Sigmoid colon (tissue), 7 donors: ENCODE measurements at regions of chr15 and their contacts with region 1.

Region 1: GRCh38 chr15:74540761-74541493 is at the start of gene ARID3B:
- DNase-seq: peak; percentile 99
- H3K4me3 ChIP-seq: peak within 1 kb of the TSS; percentile 84 to 92 (median 88)
- H3K27ac ChIP-seq: peak within 1 kb of the TSS; percentile 78 to 84 (median 82)
- H3K4me1 ChIP-seq: peaks cover 0 to 31% (median 27%) of the 10 kb centered on the region in 4 donors
- H3K27me3 ChIP-seq: no peaks in the 10 kb centered on the region
- CTCF ChIP-seq: no peak
- EP300 ChIP-seq: no peak
- POLR2A ChIP-seq: peak; percentile 6 to 35
- total RNA-seq, gene ARID3B: 2.3 to 9.7 (median 3.4) TPM

Region 2: GRCh38 chr15:74519311-74519710 is 21.6 kb before region 1 on chr15:
- intact Hi-C with region 1: no loop called
- DNase-seq: no peak
- H3K4me3 ChIP-seq: no peak overlapping the region
- H3K27ac ChIP-seq: no peak overlapping the region
- H3K4me1 ChIP-seq: no peaks in the 10 kb centered on the region
- H3K27me3 ChIP-seq: no peaks in the 10 kb centered on the region
- CTCF ChIP-seq: no peak
- EP300 ChIP-seq: no peak
- POLR2A ChIP-seq: no peak

Region 3: GRCh38 chr15:74598126-74598842 is 57.4 kb after region 1 on chr15:
- intact Hi-C with region 1: loop called (anchors 2 kb)
- DNase-seq: peak; percentile 98
- H3K4me3 ChIP-seq: peak overlapping the region; percentile 47 to 68 (median 60)
- H3K27ac ChIP-seq: peak overlapping the region; percentile 85 to 93 (median 88)
- H3K4me1 ChIP-seq: peaks cover 0 to 24% (median 22%) of the 10 kb centered on the region in 4 donors
- H3K27me3 ChIP-seq: no peaks in the 10 kb centered on the region
- CTCF ChIP-seq: no peak
- EP300 ChIP-seq: no peak
- POLR2A ChIP-seq: peak; percentile 83 to 89

Region 4: DNA sequence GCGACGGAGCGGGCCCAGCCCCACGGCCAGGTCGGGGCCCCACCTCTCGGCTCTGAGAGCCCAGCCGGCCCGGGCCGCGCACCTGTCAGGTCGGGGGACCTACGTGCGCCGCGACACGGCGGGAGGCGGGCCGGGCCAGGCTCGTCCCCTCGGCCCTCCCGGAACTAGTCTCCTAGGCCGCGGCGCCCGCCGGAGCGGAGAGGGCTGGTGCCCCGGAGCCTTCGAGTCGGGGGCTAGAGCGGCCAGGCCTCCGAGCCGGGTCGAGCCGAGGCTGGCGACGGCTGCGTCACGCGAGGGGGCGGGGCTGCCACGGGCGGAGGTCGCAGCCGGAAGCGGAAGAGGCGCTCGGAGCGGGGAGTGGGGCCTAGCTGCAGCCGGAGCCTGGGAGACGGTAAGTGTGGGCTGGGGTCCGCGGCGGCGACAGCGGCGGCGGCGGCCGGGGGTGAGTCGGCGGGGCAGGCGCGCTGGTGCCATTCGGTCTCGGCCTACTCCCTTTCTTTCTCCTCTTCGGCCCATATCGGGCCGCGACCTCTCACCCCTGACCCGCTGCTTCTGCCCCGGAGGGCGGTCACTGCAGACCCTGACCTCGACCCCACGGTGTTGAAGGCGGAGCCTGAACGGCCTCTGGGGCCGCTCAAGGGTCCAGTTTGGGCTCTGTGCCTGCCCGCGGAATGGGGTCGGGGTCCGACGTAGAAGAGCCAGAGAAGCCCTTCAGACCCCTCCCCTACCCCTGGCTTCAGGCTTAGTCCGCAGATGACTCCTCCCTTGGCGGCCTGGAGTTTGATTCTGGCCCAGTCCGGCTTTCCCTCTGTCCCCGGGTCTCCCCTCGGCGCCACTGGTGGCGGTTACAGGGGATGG is 74.8 kb after region 1 on chr15 and contains the start of gene CLK3:
- intact Hi-C with region 1: loop called (anchors 2 kb)
- DNase-seq: peak; percentile 98
- H3K4me3 ChIP-seq: peak within 1 kb of the TSS; percentile 75 to 100 (median 88)
- H3K27ac ChIP-seq: peak within 1 kb of the TSS; percentile 96 to 100 (median 98)
- H3K4me1 ChIP-seq: peaks cover 0 to 45% (median 34%) of the 10 kb centered on the region in 4 donors
- H3K27me3 ChIP-seq: no peaks in the 10 kb centered on the region
- CTCF ChIP-seq: no peak
- EP300 ChIP-seq: no peak
- POLR2A ChIP-seq: peak; percentile 36 to 43
- total RNA-seq, gene CLK3: 73.1 to 124 (median 115) TPM

Region 5: DNA sequence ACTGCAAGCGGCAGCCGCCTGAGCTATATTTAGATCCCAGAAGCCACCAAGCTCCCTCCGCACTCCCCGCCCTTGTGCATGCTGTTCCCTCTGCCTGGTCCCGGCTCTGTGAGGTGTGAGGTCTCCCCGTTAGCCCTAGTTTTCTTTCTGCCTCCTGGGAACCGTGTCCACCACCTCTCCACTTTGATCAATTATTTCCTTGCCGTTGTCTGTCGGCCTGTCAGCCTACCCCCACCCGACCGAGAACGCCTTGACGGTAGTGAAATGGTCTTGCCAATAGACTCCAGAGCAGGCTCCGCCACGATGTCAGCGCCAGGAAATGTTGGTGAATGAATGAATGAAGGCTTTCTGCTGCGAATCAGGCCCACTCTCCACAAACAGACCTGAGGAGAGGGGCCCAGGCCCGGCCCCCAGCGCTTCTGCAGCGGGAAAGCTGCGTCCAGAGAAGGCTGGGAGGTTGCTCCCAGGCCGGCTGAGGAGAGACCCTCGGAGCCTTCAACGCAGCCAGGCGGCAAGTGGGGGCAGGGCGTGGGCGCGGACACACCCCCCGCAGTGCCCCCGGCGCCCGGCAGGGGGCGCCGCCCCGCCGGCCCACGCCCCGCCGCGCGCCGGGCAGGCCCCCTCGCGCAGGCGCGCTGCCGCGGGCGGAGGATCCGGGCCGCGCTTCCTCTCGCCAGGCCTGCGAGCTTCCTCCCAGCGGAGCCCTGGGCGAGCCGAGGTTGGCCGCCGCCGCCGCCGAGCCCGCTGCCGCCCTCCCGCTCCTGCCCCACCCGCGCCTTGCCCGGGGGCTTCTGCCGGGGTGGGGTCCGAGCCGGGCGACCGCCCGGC is 240.7 kb after region 1 on chr15 and contains the start of gene CSK:
- intact Hi-C with region 1: loop called (anchors 5 kb)
- DNase-seq: peak; percentile 86
- H3K4me3 ChIP-seq: peak within 1 kb of the TSS; percentile 48 to 92 (median 78)
- H3K27ac ChIP-seq: peak within 1 kb of the TSS; percentile 77 to 93 (median 82)
- H3K4me1 ChIP-seq: peaks cover 0 to 60% (median 46%) of the 10 kb centered on the region in 4 donors
- H3K27me3 ChIP-seq: no peaks in the 10 kb centered on the region
- CTCF ChIP-seq: peak in 3 of 4 experiments; percentile 14 to 54 (median 26)
- EP300 ChIP-seq: no peak
- POLR2A ChIP-seq: no peak
- total RNA-seq, gene CSK: 9.7 to 22.4 (median 14.2) TPM

Region 6: GRCh38 chr15:74937596-74938296 is 396.8 kb after region 1 on chr15 and contains the start of gene COX5A:
- intact Hi-C with region 1: loop called (anchors 10 kb)
- DNase-seq: peak; percentile 97
- H3K4me3 ChIP-seq: peak within 1 kb of the TSS; percentile 84 to 95 (median 92)
- H3K27ac ChIP-seq: peak within 1 kb of the TSS; percentile 91 to 97 (median 96)
- H3K4me1 ChIP-seq: peaks cover 2 to 39% (median 28%) of the 10 kb centered on the region in 4 donors
- H3K27me3 ChIP-seq: no peaks in the 10 kb centered on the region
- CTCF ChIP-seq: no peak
- EP300 ChIP-seq: peak in 1 of 4 donors; percentile 9
- POLR2A ChIP-seq: peak in 1 of 2 donors; percentile 42
- total RNA-seq, gene COX5A: 73.7 to 124 (median 81.6) TPM